CD8-positive, alpha-beta T cell (primary cell): ENCODE measurements at regions of chr3 and their contacts with region 1.

Region 1: DNA sequence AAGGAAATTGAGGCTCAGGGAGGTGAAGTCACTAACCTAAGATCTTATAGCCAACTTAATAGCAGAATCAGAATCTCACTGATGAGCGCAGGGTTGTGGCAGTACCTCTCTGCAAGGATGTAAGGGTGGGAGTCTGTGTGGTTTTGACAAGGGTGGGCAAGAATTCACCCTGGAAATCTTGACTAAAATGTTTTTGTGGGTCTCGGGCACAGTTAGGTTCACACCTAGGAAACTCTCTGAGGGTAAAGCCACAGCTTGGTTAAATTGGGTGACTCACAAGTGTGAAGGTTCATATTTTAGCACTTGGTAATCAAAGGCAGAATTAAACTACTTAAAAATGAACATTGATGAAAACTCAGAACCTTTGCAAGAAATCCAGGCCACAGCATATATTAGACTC is 178.2 kb upstream of the EOMES start:
- DNase-seq: peak in 7 of 9 experiments; percentile 9 to 80 (median 47)
- ATAC-seq: peak; percentile 81
- H3K4me3 ChIP-seq: no peak overlapping the region
- H3K4me3 Mint-ChIP-seq: no peak overlapping the region
- H3K27ac ChIP-seq: peak overlapping the region in 1 of 2 experiments; percentile 31
- H3K27ac Mint-ChIP-seq: peak overlapping the region; percentile 15
- H3K4me1 ChIP-seq: peaks cover 46% of the 10 kb centered on the region
- H3K4me1 Mint-ChIP-seq: peaks cover 67% of the 10 kb centered on the region
- H3K27me3 ChIP-seq: no peaks in the 10 kb centered on the region
- H3K27me3 Mint-ChIP-seq: no peaks in the 10 kb centered on the region
- CTCF ChIP-seq: no peak

Region 2: GRCh38 chr3:27827041-27827440 is 73.3 kb before region 1 on chr3:
- CTCF ChIA-PET with region 1: no interaction called
- POLR2A ChIA-PET with region 1: no interaction called
- intact Hi-C with region 1: loop called in 1 of 2 experiments (anchors 5 kb)
- DNase-seq: peak in 1 of 9 experiments; percentile 14
- ATAC-seq: no peak
- H3K4me3 ChIP-seq: no peak overlapping the region
- H3K4me3 Mint-ChIP-seq: no peak overlapping the region
- H3K27ac ChIP-seq: no peak overlapping the region
- H3K27ac Mint-ChIP-seq: no peak overlapping the region
- H3K4me1 ChIP-seq: peaks cover 8% of the 10 kb centered on the region
- H3K4me1 Mint-ChIP-seq: peaks cover 25% of the 10 kb centered on the region
- H3K27me3 ChIP-seq: no peaks in the 10 kb centered on the region
- H3K27me3 Mint-ChIP-seq: no peaks in the 10 kb centered on the region
- CTCF ChIP-seq: no peak

Region 3: GRCh38 chr3:27861046-27862036 is 39.0 kb before region 1 on chr3:
- CTCF ChIA-PET with region 1: no interaction called
- POLR2A ChIA-PET with region 1: interaction called, 3 read pairs
- intact Hi-C with region 1: loop called in 1 of 2 experiments (anchors 2 kb)
- DNase-seq: peak in 3 of 9 experiments; percentile 22 to 75 (median 64)
- ATAC-seq: peak; percentile 80
- H3K4me3 ChIP-seq: no peak overlapping the region
- H3K4me3 Mint-ChIP-seq: peak overlapping the region; percentile 46
- H3K27ac ChIP-seq: peak overlapping the region in 1 of 2 experiments; percentile 63
- H3K27ac Mint-ChIP-seq: peak overlapping the region; percentile 92
- H3K4me1 ChIP-seq: peaks cover 38% of the 10 kb centered on the region
- H3K4me1 Mint-ChIP-seq: peaks cover 47% of the 10 kb centered on the region
- H3K27me3 ChIP-seq: no peaks in the 10 kb centered on the region
- H3K27me3 Mint-ChIP-seq: no peaks in the 10 kb centered on the region
- CTCF ChIP-seq: no peak

Region 4: GRCh38 chr3:27880969-27881892 is 19.1 kb before region 1 on chr3:
- CTCF ChIA-PET with region 1: interaction called, 4 read pairs
- POLR2A ChIA-PET with region 1: interaction called, 6 read pairs
- intact Hi-C with region 1: loop called in 1 of 2 experiments (anchors 1 kb)
- DNase-seq: peak; percentile 34 to 87 (median 65)
- ATAC-seq: peak; percentile 88
- H3K4me3 ChIP-seq: peak overlapping the region; percentile 37 to 47
- H3K4me3 Mint-ChIP-seq: peak overlapping the region; percentile 86
- H3K27ac ChIP-seq: peak overlapping the region; percentile 22 to 79
- H3K27ac Mint-ChIP-seq: peak overlapping the region; percentile 93
- H3K4me1 ChIP-seq: peaks cover 65% of the 10 kb centered on the region
- H3K4me1 Mint-ChIP-seq: peaks cover 78% of the 10 kb centered on the region
- H3K27me3 ChIP-seq: no peaks in the 10 kb centered on the region
- H3K27me3 Mint-ChIP-seq: no peaks in the 10 kb centered on the region
- CTCF ChIP-seq: no peak

Region 5: GRCh38 chr3:27888562-27888961 is 11.8 kb before region 1 on chr3:
- CTCF ChIA-PET with region 1: interaction called, 5 read pairs
- POLR2A ChIA-PET with region 1: no interaction called
- intact Hi-C with region 1: loop called in 1 of 2 experiments (anchors 1 kb)
- DNase-seq: peak in 2 of 9 experiments; percentile 10 to 20
- ATAC-seq: no peak
- H3K4me3 ChIP-seq: no peak overlapping the region
- H3K4me3 Mint-ChIP-seq: no peak overlapping the region
- H3K27ac ChIP-seq: no peak overlapping the region
- H3K27ac Mint-ChIP-seq: no peak overlapping the region
- H3K4me1 ChIP-seq: peaks cover 8% of the 10 kb centered on the region
- H3K4me1 Mint-ChIP-seq: peaks cover 18% of the 10 kb centered on the region
- H3K27me3 ChIP-seq: no peaks in the 10 kb centered on the region
- H3K27me3 Mint-ChIP-seq: no peaks in the 10 kb centered on the region
- CTCF ChIP-seq: no peak

Region 6: DNA sequence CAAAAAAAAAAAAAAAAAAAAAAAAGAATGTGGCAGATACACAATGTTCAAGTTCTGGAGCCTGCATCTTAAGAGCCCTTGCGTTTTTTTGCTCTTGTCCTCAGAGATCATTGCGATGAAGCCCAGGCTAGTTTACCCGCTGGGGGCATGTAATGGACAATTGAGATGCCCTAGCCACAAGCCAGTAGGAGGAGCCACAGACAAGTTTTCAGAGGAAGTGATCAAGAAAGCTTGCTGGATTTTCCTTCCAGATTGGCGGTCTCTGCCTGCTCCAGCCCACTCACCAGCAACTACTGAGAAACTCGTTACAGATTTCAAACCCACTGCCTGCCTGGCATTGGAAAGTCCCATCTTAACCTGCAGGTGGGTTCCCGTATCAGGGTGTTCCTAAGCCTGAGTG is 13.9 kb after region 1 on chr3:
- CTCF ChIA-PET with region 1: no interaction called
- POLR2A ChIA-PET with region 1: no interaction called
- intact Hi-C with region 1: no loop called
- DNase-seq: peak in 2 of 9 experiments; percentile 29 to 33
- ATAC-seq: no peak
- H3K4me3 ChIP-seq: no peak overlapping the region
- H3K4me3 Mint-ChIP-seq: no peak overlapping the region
- H3K27ac ChIP-seq: no peak overlapping the region
- H3K27ac Mint-ChIP-seq: no peak overlapping the region
- H3K4me1 ChIP-seq: no peaks in the 10 kb centered on the region
- H3K4me1 Mint-ChIP-seq: peaks cover 6% of the 10 kb centered on the region
- H3K27me3 ChIP-seq: no peaks in the 10 kb centered on the region
- H3K27me3 Mint-ChIP-seq: no peaks in the 10 kb centered on the region
- CTCF ChIP-seq: no peak